Breast epithelium (tissue), 4 donors: ENCODE measurements at regions of chr7 and their contacts with region 1.

Region 1: GRCh38 chr7:144713850-144714249 is 122.0 kb downstream of the TPK1 start:
- DNase-seq: no peak
- H3K4me3 ChIP-seq: no peak overlapping the region
- H3K27ac ChIP-seq: no peak overlapping the region
- H3K4me1 ChIP-seq: no peaks in the 10 kb centered on the region
- H3K27me3 ChIP-seq: no peaks in the 10 kb centered on the region
- CTCF ChIP-seq: no peak
- POLR2A ChIP-seq: no peak

Region 2: GRCh38 chr7:144006029-144006691 is 707.7 kb before region 1 on chr7:
- intact Hi-C with region 1: loop called (anchors 5 kb)
- DNase-seq: no peak
- H3K4me3 ChIP-seq: no peak overlapping the region
- H3K27ac ChIP-seq: no peak overlapping the region
- H3K4me1 ChIP-seq: no peaks in the 10 kb centered on the region
- H3K27me3 ChIP-seq: no peaks in the 10 kb centered on the region
- CTCF ChIP-seq: no peak
- POLR2A ChIP-seq: no peak

Region 3: DNA sequence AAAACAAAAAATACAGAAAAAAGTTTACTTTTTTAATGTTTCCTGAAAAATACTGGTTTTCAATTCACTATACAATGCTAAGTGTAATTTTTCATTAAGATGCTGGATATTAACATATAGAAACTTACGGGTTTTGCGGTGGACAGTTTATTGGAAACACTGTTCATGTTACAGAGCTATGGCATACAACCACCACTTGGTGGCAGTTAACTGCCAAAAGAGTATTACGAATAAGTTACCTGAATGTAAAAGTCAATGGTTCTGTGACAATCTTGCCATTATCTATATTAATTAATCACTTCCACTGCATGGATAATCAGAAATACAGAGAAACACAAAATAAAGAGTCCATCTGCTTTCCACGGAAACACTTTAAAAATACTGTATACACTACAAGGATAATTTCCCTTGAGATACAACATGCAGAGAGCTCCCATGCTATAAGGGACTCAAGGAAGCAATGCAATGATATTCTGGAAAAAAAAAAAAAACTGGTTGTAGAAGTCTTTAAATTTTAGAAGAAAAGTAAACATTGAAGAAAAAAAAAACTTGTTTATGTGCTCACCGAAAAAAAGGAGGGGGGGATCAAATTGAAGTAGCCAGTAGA is 25.0 kb after region 1 on chr7:
- intact Hi-C with region 1: no loop called
- DNase-seq: no peak
- H3K4me3 ChIP-seq: no peak overlapping the region
- H3K27ac ChIP-seq: no peak overlapping the region
- H3K4me1 ChIP-seq: no peaks in the 10 kb centered on the region
- H3K27me3 ChIP-seq: no peaks in the 10 kb centered on the region
- CTCF ChIP-seq: peak in 2 of 3 donors; percentile 45 to 49
- POLR2A ChIP-seq: no peak